Ascending aorta (tissue), 2 donors: ENCODE measurements at regions of chr2 and their contacts with region 1.

Region 1: DNA sequence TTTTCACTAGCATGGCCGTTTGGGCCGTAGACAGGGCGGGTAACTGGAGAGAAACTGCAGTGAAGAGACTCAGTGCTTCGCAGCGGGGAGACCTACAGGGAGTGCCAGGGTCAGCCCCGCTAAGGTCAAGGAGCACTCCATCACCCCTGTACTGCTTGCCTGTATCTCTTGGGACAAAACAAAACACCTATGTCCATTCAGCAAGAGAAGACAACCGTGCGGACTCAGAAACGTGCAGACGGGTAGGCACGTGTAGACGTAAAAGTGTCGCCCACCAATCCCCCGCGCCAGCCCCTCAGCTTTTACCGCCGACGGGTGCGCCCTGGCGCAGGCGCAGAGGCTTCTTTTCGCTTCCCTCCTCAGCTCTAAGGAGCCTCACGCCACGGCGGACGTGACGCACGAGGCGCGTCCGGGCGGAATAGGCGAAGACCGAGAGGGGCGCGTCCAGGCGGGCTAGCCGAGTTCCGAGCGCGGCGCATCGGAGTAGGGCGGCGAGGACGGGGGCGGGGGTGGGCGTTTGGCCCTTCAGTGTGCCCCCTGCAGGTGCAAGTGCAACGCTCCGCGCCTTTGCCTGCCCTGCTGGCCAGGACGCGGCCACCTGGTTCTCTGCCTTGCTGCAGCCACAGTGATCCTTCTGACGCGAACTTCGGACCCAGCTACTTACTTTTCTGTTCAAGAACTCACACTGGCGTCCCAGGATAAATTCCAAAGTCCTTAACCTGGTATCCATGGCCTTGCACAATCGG is 3.3 kb upstream of the SOS1 start:
- DNase-seq: peak; percentile 83 to 97
- H3K4me3 ChIP-seq: peak overlapping the region; percentile 71 to 76
- H3K27ac ChIP-seq: peak overlapping the region; percentile 87 to 90
- H3K4me1 ChIP-seq: peaks cover 9 to 27% of the 10 kb centered on the region in 2 donors
- H3K27me3 ChIP-seq: no peaks in the 10 kb centered on the region
- CTCF ChIP-seq: peak; percentile 22 to 47 (median 42)

Region 2: DNA sequence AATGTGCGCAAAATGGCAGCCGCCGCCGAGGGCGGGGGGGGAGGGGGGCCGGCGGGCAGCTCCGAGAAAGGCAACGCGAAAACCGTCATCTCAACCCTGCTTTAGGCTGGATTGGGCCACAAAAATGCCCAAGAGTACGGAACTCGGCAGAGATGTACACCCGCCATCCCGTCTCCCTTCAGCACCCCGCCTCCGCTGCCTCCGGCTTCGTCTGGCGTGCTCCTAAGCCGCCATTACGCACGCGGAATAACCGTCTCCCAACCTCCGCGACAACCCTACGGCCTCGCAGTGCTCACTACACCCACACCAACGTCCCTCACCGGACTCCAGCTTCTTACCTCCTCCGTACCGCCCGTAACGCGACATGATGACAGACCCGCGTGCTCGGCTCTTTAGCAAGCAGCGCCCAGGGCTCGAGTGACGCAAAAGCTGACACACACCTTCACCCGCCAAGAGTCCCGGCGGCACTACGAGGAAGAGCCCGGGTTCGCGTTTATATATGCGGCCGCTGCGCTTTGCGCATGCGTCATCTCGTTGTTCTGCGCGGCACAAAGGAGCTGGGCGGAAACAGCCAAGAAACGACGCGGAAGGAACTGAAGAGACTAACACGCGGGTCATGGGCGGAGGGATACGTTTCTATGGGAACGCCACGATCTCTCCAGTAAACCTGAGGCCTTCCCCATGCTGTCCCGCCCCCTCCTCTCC is 373.1 kb before region 1 on chr2 and contains the start of gene SRSF7:
- intact Hi-C with region 1: loop called (anchors 10 kb)
- DNase-seq: peak; percentile 89 to 99
- H3K4me3 ChIP-seq: peak within 1 kb of the TSS; percentile 71 to 90
- H3K27ac ChIP-seq: peak within 1 kb of the TSS; percentile 87 to 98
- H3K4me1 ChIP-seq: peaks cover 5 to 28% of the 10 kb centered on the region in 2 donors
- H3K27me3 ChIP-seq: no peaks in the 10 kb centered on the region
- CTCF ChIP-seq: no peak
- total RNA-seq, gene SRSF7: 54.1 TPM

Region 3: GRCh38 chr2:39059366-39059952 is 64.7 kb before region 1 on chr2:
- intact Hi-C with region 1: loop called (anchors 2 kb)
- DNase-seq: no peak
- H3K4me3 ChIP-seq: no peak overlapping the region
- H3K27ac ChIP-seq: no peak overlapping the region
- H3K4me1 ChIP-seq: no peaks in the 10 kb centered on the region
- H3K27me3 ChIP-seq: no peaks in the 10 kb centered on the region
- CTCF ChIP-seq: peak; percentile 56 to 74 (median 63)

Region 4: GRCh38 chr2:39094852-39095306 is 29.3 kb before region 1 on chr2:
- intact Hi-C with region 1: no loop called
- DNase-seq: no peak
- H3K4me3 ChIP-seq: no peak overlapping the region
- H3K27ac ChIP-seq: no peak overlapping the region
- H3K4me1 ChIP-seq: peaks cover 0 to 4% of the 10 kb centered on the region in 2 donors
- H3K27me3 ChIP-seq: no peaks in the 10 kb centered on the region
- CTCF ChIP-seq: no peak

Region 5: DNA sequence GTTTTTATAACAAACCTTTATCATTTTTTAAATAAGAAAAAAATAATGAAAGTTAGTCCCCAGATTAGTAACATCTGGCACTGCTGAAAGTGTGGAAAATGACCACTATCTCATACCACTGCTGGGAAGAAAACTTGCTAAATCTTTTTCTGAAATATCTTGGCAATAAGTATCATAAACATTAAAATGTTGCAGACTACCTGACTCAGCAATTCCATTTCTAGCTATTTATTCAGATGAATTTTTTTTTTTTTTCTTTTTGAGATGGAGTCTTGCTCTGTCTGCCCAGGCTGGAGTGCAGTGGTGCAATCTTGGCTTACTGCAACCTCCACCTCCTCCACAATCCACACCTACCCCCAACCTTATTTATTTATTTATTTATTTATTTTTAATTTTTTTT is 31.9 kb after region 1 on chr2:
- intact Hi-C with region 1: loop called (anchors 1 kb)
- DNase-seq: no peak
- H3K4me3 ChIP-seq: no peak overlapping the region
- H3K27ac ChIP-seq: no peak overlapping the region
- H3K4me1 ChIP-seq: peaks cover 0 to 25% of the 10 kb centered on the region in 2 donors
- H3K27me3 ChIP-seq: no peaks in the 10 kb centered on the region
- CTCF ChIP-seq: no peak

Region 6: DNA sequence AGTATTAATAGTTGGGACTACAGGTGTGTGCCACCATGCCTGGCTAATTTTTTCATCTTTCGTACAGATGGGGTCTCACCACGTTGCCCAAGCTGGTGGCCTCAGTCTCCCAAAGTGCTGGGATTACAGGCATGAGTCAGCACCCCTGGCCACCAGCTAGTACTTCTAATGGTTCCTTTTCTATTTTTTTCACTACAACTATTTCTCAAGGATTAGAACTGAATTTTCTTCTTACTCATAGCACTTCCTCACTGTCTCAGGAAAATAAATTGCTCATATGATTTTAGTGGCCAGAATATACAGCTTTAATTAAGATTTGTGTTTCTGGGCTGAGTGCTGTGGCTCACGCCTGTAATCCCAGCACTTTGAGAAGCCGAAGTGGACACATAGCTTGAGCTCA is 39.9 kb after region 1 on chr2:
- intact Hi-C with region 1: loop called (anchors 2 kb)
- DNase-seq: no peak
- H3K4me3 ChIP-seq: no peak overlapping the region
- H3K27ac ChIP-seq: peak overlapping the region; percentile 10 to 43
- H3K4me1 ChIP-seq: peaks cover 0 to 21% of the 10 kb centered on the region in 2 donors
- H3K27me3 ChIP-seq: no peaks in the 10 kb centered on the region
- CTCF ChIP-seq: no peak

Region 7: GRCh38 chr2:39227628-39228412 is 103.6 kb after region 1 on chr2:
- intact Hi-C with region 1: loop called (anchors 1 kb)
- DNase-seq: peak in 1 of 2 donors; percentile 82
- H3K4me3 ChIP-seq: peak overlapping the region in 1 of 2 donors; percentile 59
- H3K27ac ChIP-seq: no peak overlapping the region
- H3K4me1 ChIP-seq: peaks cover 0 to 9% of the 10 kb centered on the region in 2 donors
- H3K27me3 ChIP-seq: no peaks in the 10 kb centered on the region
- CTCF ChIP-seq: peak; percentile 74 to 82 (median 77)